Head of caudate nucleus (tissue), 42 donors: ENCODE measurements at regions of chr2 and their contacts with region 1.

Region 1: DNA sequence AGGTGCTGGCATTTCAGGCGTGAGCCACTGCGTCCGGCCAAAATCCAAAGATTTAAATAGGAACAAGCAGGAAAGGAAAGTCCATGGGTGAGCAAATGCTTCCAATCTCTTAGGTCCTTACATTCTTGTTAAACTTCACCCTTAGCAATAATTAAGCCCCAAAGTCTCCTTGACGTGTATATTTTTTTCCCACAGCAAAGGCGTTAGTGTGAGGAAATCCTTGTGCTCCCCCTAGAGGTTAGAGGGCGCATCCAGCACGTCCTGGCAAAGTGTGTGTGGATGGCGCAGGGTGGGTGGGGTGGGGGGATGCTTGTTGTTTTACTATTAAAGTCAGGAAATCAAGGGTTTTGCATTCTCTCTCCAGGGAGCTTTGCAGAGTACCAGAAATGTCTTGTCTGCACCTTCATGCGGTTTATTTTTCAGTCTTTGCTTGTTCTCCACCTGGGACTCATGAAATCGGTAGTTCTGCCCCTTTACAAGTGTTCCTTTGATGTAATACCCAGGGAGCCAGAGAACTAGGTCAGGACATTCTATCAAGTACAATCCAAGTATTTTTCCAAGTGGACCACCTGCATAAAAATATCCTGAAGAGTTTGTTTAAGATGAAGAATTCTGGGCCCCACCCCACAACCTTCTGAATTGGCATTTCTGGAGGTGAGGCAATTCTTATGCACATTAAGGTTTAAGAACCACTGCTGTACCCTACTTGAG is 22.2 kb upstream of the ITSN2 start:
- DNase-seq: peak in 39 of 42 donors; percentile 33 to 87 (median 68)

Region 2: GRCh38 chr2:23824777-23825212 is 557.7 kb before region 1 on chr2:
- intact Hi-C with region 1: loop called (anchors 10 kb)
- DNase-seq: peak in 11 of 42 donors; percentile 9 to 75 (median 42)

Region 3: DNA sequence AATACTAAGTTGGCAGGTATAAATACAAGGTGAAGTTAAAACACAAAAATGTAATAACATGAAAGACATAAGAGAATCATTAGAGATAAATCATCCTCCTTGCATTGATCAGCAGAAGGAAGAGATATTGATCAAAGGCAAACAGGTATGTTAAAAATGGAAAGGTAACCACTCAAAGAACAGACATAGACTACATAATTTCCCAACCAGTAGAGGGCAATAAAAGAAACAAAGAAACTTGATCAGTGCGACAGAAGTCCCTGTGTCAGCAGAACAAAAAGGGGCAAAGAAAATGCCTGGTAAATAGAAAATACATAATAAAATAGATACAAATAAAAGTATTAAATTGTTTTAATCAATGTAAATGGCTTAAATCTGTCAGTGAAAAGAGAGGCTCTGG is 154.0 kb before region 1 on chr2:
- intact Hi-C with region 1: loop called (anchors 5 kb)
- DNase-seq: peak in 1 of 42 donors; percentile 31